ENCODE measurements at regions of chr18 and their contacts with region 1.

Region 1: DNA sequence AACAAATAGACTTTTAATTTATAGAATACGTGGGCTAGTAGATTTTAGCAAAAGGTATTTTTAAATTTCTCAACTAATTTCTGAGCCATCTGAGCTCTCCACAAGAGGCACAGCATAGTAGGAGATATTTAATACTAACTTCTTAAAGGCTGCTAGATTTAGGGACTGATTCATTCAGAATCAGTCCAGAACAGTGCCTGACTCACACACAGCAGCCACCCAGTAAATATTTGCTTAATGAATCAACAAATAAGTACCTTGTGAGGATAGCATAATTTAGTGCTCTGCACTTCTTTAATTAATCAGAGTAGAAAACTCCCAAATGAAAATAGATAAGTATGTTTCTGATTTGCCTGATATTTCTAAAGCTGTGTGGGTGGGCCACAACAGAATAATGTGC is 35.6 kb upstream of the SYT4 start:
- DNase-seq: peak; percentile 15
- ATAC-seq: no peak; the same call in 1 of the 2 replicates
- H3K4me3 ChIP-seq: no peak overlapping the region
- H3K27ac ChIP-seq: no peak overlapping the region
- H3K4me1 ChIP-seq: no peaks in the 10 kb centered on the region
- H3K27me3 ChIP-seq: no peaks in the 10 kb centered on the region
- CTCF ChIP-seq: no peak

Region 2: GRCh38 chr18:42821492-42821891 is 491.4 kb before region 1 on chr18:
- CTCF ChIA-PET with region 1: no interaction called
- POLR2A ChIA-PET with region 1: no interaction called
- intact Hi-C with region 1: no loop called
- DNase-seq: no peak
- ATAC-seq: no peak
- H3K4me3 ChIP-seq: no peak overlapping the region
- H3K27ac ChIP-seq: no peak overlapping the region
- H3K4me1 ChIP-seq: no peaks in the 10 kb centered on the region
- H3K27me3 ChIP-seq: no peaks in the 10 kb centered on the region
- CTCF ChIP-seq: no peak

Region 3: DNA sequence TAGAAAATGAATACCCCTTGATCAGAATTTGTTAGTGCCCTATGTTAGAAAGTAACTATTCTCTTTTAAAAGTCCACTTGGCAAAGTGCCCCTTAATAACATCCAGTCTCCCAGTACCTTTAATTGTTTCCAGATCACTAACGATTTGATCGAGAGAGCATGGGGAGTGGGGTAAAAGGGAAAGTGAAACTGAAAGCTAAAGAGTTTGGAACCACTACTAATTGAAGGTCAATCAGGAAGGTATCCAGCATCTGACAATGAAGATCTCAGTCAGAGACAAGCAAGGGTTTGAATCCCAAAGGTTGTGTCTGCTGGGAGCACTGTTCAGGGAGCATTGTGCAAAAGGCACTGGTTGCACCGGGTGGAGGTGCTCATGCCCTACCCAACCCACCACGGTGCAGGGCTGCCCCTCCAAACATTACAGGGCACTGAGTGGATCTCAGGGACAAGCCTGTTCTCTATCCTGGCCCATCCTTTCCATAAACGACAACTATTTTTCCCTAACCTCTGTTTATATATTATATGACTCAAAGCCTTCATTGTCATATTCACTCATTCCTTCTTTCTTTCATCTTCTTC is 182.9 kb before region 1 on chr18:
- CTCF ChIA-PET with region 1: no interaction called
- POLR2A ChIA-PET with region 1: no interaction called
- intact Hi-C with region 1: no loop called
- DNase-seq: no peak
- ATAC-seq: no peak
- H3K4me3 ChIP-seq: no peak overlapping the region
- H3K27ac ChIP-seq: no peak overlapping the region
- H3K4me1 ChIP-seq: no peaks in the 10 kb centered on the region
- H3K27me3 ChIP-seq: no peaks in the 10 kb centered on the region
- CTCF ChIP-seq: no peak

Region 4: GRCh38 chr18:43175257-43175656 is 137.6 kb before region 1 on chr18:
- CTCF ChIA-PET with region 1: interaction called, 15 read pairs
- POLR2A ChIA-PET with region 1: no interaction called
- intact Hi-C with region 1: no loop called
- DNase-seq: no peak
- ATAC-seq: no peak
- H3K4me3 ChIP-seq: no peak overlapping the region
- H3K27ac ChIP-seq: no peak overlapping the region
- H3K4me1 ChIP-seq: no peaks in the 10 kb centered on the region
- H3K27me3 ChIP-seq: no peaks in the 10 kb centered on the region
- CTCF ChIP-seq: no peak